ENCODE measurements at regions of chr10 and their contacts with region 1.

Region 1: GRCh38 chr10:117477961-117478670 is 64.4 kb upstream of the EMX2 start:
- DNase-seq: peak; percentile 44
- H3K4me3 ChIP-seq: no peak overlapping the region
- H3K27ac ChIP-seq: no peak overlapping the region
- H3K4me1 ChIP-seq: no peaks in the 10 kb centered on the region
- H3K27me3 ChIP-seq: peaks cover 2 to 6% of the 10 kb centered on the region in 2 experiments
- CTCF ChIP-seq: peak in 1 of 2 donors; percentile 18
- POLR2A ChIP-seq: no peak

Region 2: GRCh38 chr10:117449636-117450035 is 28.5 kb before region 1 on chr10:
- CTCF ChIA-PET with region 1: interaction called, 279 read pairs
- POLR2A ChIA-PET with region 1: no interaction called
- dilution Hi-C with region 1: no loop called
- intact Hi-C with region 1: no loop called
- DNase-seq: no peak
- H3K4me3 ChIP-seq: no peak overlapping the region
- H3K27ac ChIP-seq: no peak overlapping the region
- H3K4me1 ChIP-seq: peaks cover 4% of the 10 kb centered on the region
- H3K27me3 ChIP-seq: peaks cover 1 to 4% of the 10 kb centered on the region in 2 experiments
- CTCF ChIP-seq: peak in 1 of 2 donors; percentile 9
- POLR2A ChIP-seq: no peak

Measured in endothelial cell of umbilical vein (primary cell).